ENCODE measurements at regions of chr10 and their contacts with region 1.

Region 1: GRCh38 chr10:104650072-104650471 is 9.0 kb downstream of the SORCS3 start:
- DNase-seq: no peak
- ATAC-seq: no peak
- H3K4me3 ChIP-seq: no peak overlapping the region
- H3K27ac ChIP-seq: no peak overlapping the region
- H3K4me1 ChIP-seq: no peaks in the 10 kb centered on the region
- H3K27me3 ChIP-seq: no peaks in the 10 kb centered on the region

Region 2: GRCh38 chr10:104777086-104777799 is 127.2 kb after region 1 on chr10:
- intact Hi-C with region 1: loop called in 1 of 4 experiments (anchors 5 kb)
- DNase-seq: no peak
- ATAC-seq: no peak
- H3K4me3 ChIP-seq: no peak overlapping the region
- H3K27ac ChIP-seq: no peak overlapping the region
- H3K4me1 ChIP-seq: no peaks in the 10 kb centered on the region
- H3K27me3 ChIP-seq: no peaks in the 10 kb centered on the region

Region 3: DNA sequence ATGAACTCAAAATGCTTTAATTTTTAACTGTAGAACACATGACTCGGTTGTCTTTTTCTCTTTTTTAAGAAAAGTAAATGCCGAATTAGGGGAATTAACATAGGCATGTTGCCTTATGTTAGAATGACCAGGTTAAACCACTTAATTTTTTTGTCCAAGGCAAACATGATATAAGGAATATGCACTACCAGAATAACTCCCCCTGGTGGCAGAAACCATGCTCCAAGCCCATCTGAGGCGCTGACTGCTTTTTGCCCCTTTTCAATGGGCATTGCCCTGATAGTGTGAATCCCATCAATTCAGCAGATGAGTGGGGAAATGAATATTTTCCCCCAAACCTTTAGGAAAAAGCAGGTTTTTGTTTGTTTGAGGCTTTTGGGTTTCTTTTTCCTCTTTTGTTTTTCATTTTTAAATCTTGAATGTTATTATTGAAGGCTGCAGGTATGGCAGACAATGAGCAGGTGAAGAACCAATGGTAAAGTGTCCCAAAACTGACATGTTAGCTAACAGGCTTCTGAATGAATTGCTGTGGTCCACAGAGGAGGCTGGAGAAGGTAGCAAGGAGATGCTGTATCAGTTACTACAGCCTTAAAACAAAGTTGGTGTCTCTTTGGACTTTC is 275.3 kb after region 1 on chr10:
- intact Hi-C with region 1: loop called (anchors 5 to 10 kb)
- DNase-seq: no peak
- ATAC-seq: no peak
- H3K4me3 ChIP-seq: no peak overlapping the region
- H3K27ac ChIP-seq: no peak overlapping the region
- H3K4me1 ChIP-seq: no peaks in the 10 kb centered on the region
- H3K27me3 ChIP-seq: no peaks in the 10 kb centered on the region